ENCODE measurements at regions of chr12 and their contacts with region 1.

Region 1: DNA sequence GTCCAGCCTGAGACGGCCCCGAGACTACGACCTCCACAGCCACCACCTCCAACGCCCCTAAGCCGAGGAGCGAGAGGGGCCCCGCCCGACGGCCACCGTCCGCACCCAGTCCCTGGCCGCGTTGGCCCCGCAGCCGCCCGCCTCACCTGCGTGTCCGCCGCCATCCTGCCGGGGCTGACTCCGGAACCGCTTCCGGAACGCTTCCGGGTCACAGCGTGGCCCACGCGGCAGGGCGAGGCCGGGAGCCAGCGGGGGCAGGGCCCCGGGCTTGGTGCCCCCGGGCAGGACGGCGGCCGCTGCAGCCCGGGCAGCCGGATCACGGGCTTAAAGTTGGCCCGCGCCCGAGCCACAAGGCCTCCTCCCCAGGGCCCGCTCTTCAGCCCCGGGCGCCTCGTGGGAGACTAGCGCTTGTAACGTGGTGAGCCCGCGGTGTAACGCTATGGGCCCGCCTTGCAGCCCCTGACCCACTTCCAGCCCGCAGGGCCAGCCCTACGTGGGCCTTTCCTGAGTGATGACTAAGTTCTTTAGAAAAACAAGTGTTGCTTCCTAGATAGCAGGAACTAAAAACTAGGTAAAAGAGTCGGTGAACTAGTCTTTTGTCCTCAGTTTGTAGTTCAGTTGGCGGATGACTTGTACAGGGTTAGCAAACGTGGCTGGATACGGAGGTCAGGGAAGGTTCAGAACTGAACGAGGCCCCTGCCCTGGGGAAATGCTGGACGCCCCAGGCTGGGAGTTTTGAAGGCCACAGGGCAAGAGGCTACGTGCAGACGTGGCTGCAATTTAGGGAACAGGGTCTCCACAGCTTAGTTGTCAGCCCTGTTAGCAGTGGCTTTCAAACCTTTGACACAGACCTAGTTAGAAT is at the start of gene GCN1:
- DNase-seq: peak; percentile 85
- ATAC-seq: peak; percentile 81
- H3K4me3 Mint-ChIP-seq: peak within 1 kb of the TSS; percentile 93
- H3K27ac Mint-ChIP-seq: peak within 1 kb of the TSS; percentile 91
- H3K4me1 Mint-ChIP-seq: peaks cover 57% of the 10 kb centered on the region
- H3K27me3 Mint-ChIP-seq: no peaks in the 10 kb centered on the region
- CTCF ChIP-seq: no peak
- total RNA-seq, gene GCN1: 130 to 137 TPM

Region 2: GRCh38 chr12:119869720-119870119 is 325.0 kb before region 1 on chr12:
- CTCF ChIA-PET with region 1: no interaction called
- POLR2A ChIA-PET with region 1: no interaction called
- intact Hi-C with region 1: no loop called
- DNase-seq: no peak
- ATAC-seq: no peak
- H3K4me3 Mint-ChIP-seq: no peak overlapping the region
- H3K27ac Mint-ChIP-seq: no peak overlapping the region
- H3K4me1 Mint-ChIP-seq: no peaks in the 10 kb centered on the region
- H3K27me3 Mint-ChIP-seq: no peaks in the 10 kb centered on the region
- CTCF ChIP-seq: no peak

Region 3: GRCh38 chr12:120012067-120012621 is 182.6 kb before region 1 on chr12:
- CTCF ChIA-PET with region 1: no interaction called
- POLR2A ChIA-PET with region 1: interaction called, 7 read pairs
- intact Hi-C with region 1: loop called (anchors 10 kb)
- DNase-seq: peak; percentile 92
- ATAC-seq: peak; percentile 74
- H3K4me3 Mint-ChIP-seq: peak overlapping the region; percentile 72
- H3K27ac Mint-ChIP-seq: peak overlapping the region; percentile 98
- H3K4me1 Mint-ChIP-seq: peaks cover 86% of the 10 kb centered on the region
- H3K27me3 Mint-ChIP-seq: no peaks in the 10 kb centered on the region
- CTCF ChIP-seq: no peak

Region 4: GRCh38 chr12:120175062-120175461 is 19.7 kb before region 1 on chr12:
- CTCF ChIA-PET with region 1: no interaction called
- POLR2A ChIA-PET with region 1: interaction called, 36 read pairs
- intact Hi-C with region 1: no loop called
- DNase-seq: no peak
- ATAC-seq: no peak
- H3K4me3 Mint-ChIP-seq: no peak overlapping the region
- H3K27ac Mint-ChIP-seq: no peak overlapping the region
- H3K4me1 Mint-ChIP-seq: no peaks in the 10 kb centered on the region
- H3K27me3 Mint-ChIP-seq: no peaks in the 10 kb centered on the region
- CTCF ChIP-seq: no peak

Region 5: GRCh38 chr12:120228291-120229070 is 33.7 kb after region 1 on chr12:
- CTCF ChIA-PET with region 1: interaction called, 6 read pairs
- POLR2A ChIA-PET with region 1: interaction called, 139 read pairs
- intact Hi-C with region 1: no loop called
- DNase-seq: peak; percentile 92
- ATAC-seq: peak; percentile 72
- H3K4me3 Mint-ChIP-seq: peak overlapping the region; percentile 0
- H3K27ac Mint-ChIP-seq: peak overlapping the region; percentile 36
- H3K4me1 Mint-ChIP-seq: peaks cover 77% of the 10 kb centered on the region
- H3K27me3 Mint-ChIP-seq: no peaks in the 10 kb centered on the region
- CTCF ChIP-seq: peak; percentile 83

Region 6: GRCh38 chr12:120265473-120266179 is 70.9 kb after region 1 on chr12 and contains the start of gene PXN:
- CTCF ChIA-PET with region 1: no interaction called
- POLR2A ChIA-PET with region 1: interaction called, 107 read pairs
- intact Hi-C with region 1: no loop called
- DNase-seq: peak; percentile 88
- ATAC-seq: peak; percentile 82
- H3K4me3 Mint-ChIP-seq: peak within 1 kb of the TSS; percentile 78
- H3K27ac Mint-ChIP-seq: peak within 1 kb of the TSS; percentile 79
- H3K4me1 Mint-ChIP-seq: peaks cover 45% of the 10 kb centered on the region
- H3K27me3 Mint-ChIP-seq: no peaks in the 10 kb centered on the region
- CTCF ChIP-seq: peak; percentile 71
- total RNA-seq, gene PXN: 40.2 to 45.3 TPM

Region 7: GRCh38 chr12:120301962-120302815 is 107.4 kb after region 1 on chr12 and contains the start of gene SIRT4:
- CTCF ChIA-PET with region 1: no interaction called
- POLR2A ChIA-PET with region 1: interaction called, 10 read pairs
- intact Hi-C with region 1: no loop called
- DNase-seq: peak; percentile 98
- ATAC-seq: peak; percentile 99
- H3K4me3 Mint-ChIP-seq: peak within 1 kb of the TSS; percentile 98
- H3K27ac Mint-ChIP-seq: peak within 1 kb of the TSS; percentile 91
- H3K4me1 Mint-ChIP-seq: peaks cover 8% of the 10 kb centered on the region
- H3K27me3 Mint-ChIP-seq: no peaks in the 10 kb centered on the region
- CTCF ChIP-seq: peak; percentile 66
- total RNA-seq, gene SIRT4: 2.7 to 3.3 TPM

Measured in activated CD8-positive, alpha-beta T cell treated with anti-CD3 and anti-CD28 coated beads for 36 hours (primary cell).